ENCODE measurements at regions of chr7 and their contacts with region 1.

Region 1: GRCh38 chr7:46369933-46370654 is 449.0 kb upstream of the IGFBP3 start:
- DNase-seq: peak; percentile 32
- H3K4me3 ChIP-seq: no peak overlapping the region
- H3K27ac ChIP-seq: no peak overlapping the region
- H3K4me1 ChIP-seq: no peaks in the 10 kb centered on the region
- H3K27me3 ChIP-seq: no peaks in the 10 kb centered on the region
- CTCF ChIP-seq: no peak

Region 2: GRCh38 chr7:46072683-46073082 is 297.4 kb before region 1 on chr7:
- CTCF ChIA-PET with region 1: no interaction called
- POLR2A ChIA-PET with region 1: no interaction called
- intact Hi-C with region 1: no loop called
- DNase-seq: no peak
- H3K4me3 ChIP-seq: no peak overlapping the region
- H3K27ac ChIP-seq: no peak overlapping the region
- H3K4me1 ChIP-seq: no peaks in the 10 kb centered on the region
- H3K27me3 ChIP-seq: no peaks in the 10 kb centered on the region
- CTCF ChIP-seq: no peak

Region 3: GRCh38 chr7:47088329-47089067 is 718.4 kb after region 1 on chr7:
- CTCF ChIA-PET with region 1: no interaction called
- POLR2A ChIA-PET with region 1: no interaction called
- intact Hi-C with region 1: loop called (anchors 10 kb)
- DNase-seq: peak; percentile 76
- H3K4me3 ChIP-seq: no peak overlapping the region
- H3K27ac ChIP-seq: no peak overlapping the region
- H3K4me1 ChIP-seq: no peaks in the 10 kb centered on the region
- H3K27me3 ChIP-seq: no peaks in the 10 kb centered on the region
- CTCF ChIP-seq: peak; percentile 87

Measured in A673 (cell line).